ENCODE measurements at regions of chr12 and their contacts with region 1.

Region 1: GRCh38 chr12:113310489-113310888 is 24.4 kb downstream of the SLC8B1 start:
- H3K4me3 Mint-ChIP-seq: no peak overlapping the region
- H3K27ac Mint-ChIP-seq: no peak overlapping the region
- H3K4me1 Mint-ChIP-seq: no peaks in the 10 kb centered on the region
- H3K27me3 Mint-ChIP-seq: no peaks in the 10 kb centered on the region

Region 2: GRCh38 chr12:113378291-113378690 is 67.8 kb after region 1 on chr12:
- intact Hi-C with region 1: loop called (anchors 5 kb)
- H3K4me3 Mint-ChIP-seq: no peak overlapping the region
- H3K27ac Mint-ChIP-seq: no peak overlapping the region
- H3K4me1 Mint-ChIP-seq: no peaks in the 10 kb centered on the region
- H3K27me3 Mint-ChIP-seq: no peaks in the 10 kb centered on the region

Region 3: GRCh38 chr12:113388351-113388750 is 77.9 kb after region 1 on chr12:
- intact Hi-C with region 1: no loop called
- H3K4me3 Mint-ChIP-seq: no peak overlapping the region
- H3K27ac Mint-ChIP-seq: no peak overlapping the region
- H3K4me1 Mint-ChIP-seq: no peaks in the 10 kb centered on the region
- H3K27me3 Mint-ChIP-seq: no peaks in the 10 kb centered on the region

Measured in dendritic cell treated with granulocyte-macrophage colony-stimulating factor and Interleukin-4, amounts not matched to agents 40 ng/mL and 50 ng/mL, for 4 days (primary cell).